ENCODE measurements at regions of chr7 and their contacts with region 1.

Region 1: GRCh38 chr7:1459522-1459892 is 237 bp upstream of the MICALL2 start:
- DNase-seq: peak; percentile 94
- ATAC-seq: peak; percentile 70
- H3K4me3 ChIP-seq: peak overlapping the region; percentile 67 to 86 (median 86); a peak in 5 of 6 replicates
- H3K27ac ChIP-seq: peak overlapping the region; percentile 64
- H3K4me1 ChIP-seq: peaks cover 73% of the 10 kb centered on the region
- H3K27me3 ChIP-seq: no peaks in the 10 kb centered on the region
- CTCF ChIP-seq: no peak
- EP300 ChIP-seq: no peak
- POLR2A ChIP-seq: no peak
- RAD21 ChIP-seq: no peak

Region 2: GRCh38 chr7:1532483-1533424 is 73.2 kb after region 1 on chr7:
- CTCF ChIA-PET with region 1: no interaction called
- POLR2A ChIA-PET with region 1: no interaction called
- in situ Hi-C with region 1: no loop called
- intact Hi-C with region 1: loop called (anchors 2 kb)
- DNase-seq: peak; percentile 77
- ATAC-seq: peak; percentile 45
- H3K4me3 ChIP-seq: peak overlapping the region; percentile 60 to 86 (median 86)
- H3K27ac ChIP-seq: peak overlapping the region; percentile 81
- H3K4me1 ChIP-seq: peaks cover 69% of the 10 kb centered on the region
- H3K27me3 ChIP-seq: peaks cover 0 to 2% of the 10 kb centered on the region in 2 experiments; a peak in 1 of 5 replicates
- CTCF ChIP-seq: no peak
- EP300 ChIP-seq: 0 out of 4 replicates have a peak, but pooled peaks of 1 of the 2 experiments have one; percentile 29
- POLR2A ChIP-seq: peak in 1 of 2 experiments; percentile 25; a peak in 1 of 4 replicates
- RAD21 ChIP-seq: no peak

Region 3: GRCh38 chr7:1912593-1913465 is 453.3 kb after region 1 on chr7:
- CTCF ChIA-PET with region 1: no interaction called
- POLR2A ChIA-PET with region 1: no interaction called
- in situ Hi-C with region 1: no loop called
- intact Hi-C with region 1: no loop called
- DNase-seq: no peak
- ATAC-seq: no peak
- H3K4me3 ChIP-seq: no peak overlapping the region
- H3K27ac ChIP-seq: no peak overlapping the region
- H3K4me1 ChIP-seq: no peaks in the 10 kb centered on the region
- H3K27me3 ChIP-seq: no peaks in the 10 kb centered on the region
- CTCF ChIP-seq: no peak
- EP300 ChIP-seq: no peak
- POLR2A ChIP-seq: no peak
- RAD21 ChIP-seq: no peak